Dorsolateral prefrontal cortex (tissue), 120 donors: ENCODE measurements at regions of chr6 and their contacts with region 1.

Region 1: DNA sequence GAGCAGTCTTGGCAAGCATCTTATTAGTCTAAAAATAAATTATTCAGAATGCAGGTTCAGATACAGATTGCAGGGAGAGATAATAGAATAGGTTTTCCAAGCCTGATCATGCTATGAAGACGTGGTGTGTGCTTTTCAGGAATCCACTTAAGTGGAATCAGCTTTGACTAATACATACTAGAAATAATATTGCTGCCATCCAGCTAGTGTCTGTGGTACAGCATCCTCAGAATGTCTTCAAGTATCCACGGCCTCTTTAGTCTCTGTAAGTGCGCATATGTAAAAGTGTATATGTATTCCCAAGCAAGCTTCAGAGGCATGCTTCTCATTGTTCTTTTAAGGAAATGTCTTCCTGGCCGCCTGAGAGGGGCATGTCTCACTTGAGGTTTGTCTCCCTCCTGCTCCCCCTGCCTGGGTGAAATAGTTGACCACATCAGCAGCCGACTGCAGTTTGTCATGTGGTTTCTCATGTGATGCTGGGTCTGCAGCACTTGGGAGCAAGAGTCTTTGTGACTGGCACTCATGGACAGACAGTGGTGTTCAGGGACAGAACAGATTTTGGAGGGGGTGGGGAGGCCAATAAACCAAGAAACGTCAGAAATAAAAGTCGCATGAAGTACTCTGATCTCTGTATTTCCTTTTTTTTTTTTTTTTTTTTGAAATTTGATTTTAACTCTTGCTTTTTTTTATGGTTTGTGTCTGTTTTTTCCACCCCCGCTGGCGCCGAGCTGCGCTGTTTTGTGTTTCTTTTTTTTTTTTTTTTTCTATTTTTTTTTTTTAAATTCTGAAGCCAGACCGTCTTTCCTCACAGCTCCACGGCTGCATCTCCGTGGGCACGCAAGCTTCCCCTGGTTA is 150.8 kb downstream of the PRL start:
- DNase-seq: peak; percentile 26 to 92 (median 86)
- H3K4me3 ChIP-seq: peak overlapping the region; percentile 47 to 86 (median 72)
- H3K27ac ChIP-seq: peak overlapping the region in 58 of 59 donors; percentile 7 to 93 (median 84)
- H3K27me3 ChIP-seq: no peaks in the 10 kb centered on the region
- CTCF ChIP-seq: peak; percentile 22 to 70 (median 53)

Region 2: DNA sequence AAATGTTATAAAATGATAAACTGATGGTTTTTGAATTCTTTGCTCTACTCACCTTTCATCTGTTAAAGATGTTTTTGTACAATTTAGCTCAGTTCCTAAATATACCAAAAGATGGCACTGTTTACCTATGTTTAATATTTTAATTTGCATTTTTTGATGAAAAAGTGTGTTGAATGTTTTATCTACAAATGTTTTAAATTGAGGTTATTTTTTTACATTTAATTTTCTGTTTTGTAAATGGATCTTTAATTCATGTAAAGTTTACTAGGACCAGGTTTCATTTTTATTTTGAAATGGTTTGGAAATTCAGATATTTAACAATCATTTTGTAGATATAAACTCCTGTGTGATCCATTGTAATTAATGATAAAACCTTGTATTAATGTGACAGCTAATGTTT is 1581.8 kb before region 1 on chr6:
- intact Hi-C with region 1: loop called in 1 of 2 experiments (anchors 10 kb)
- DNase-seq: no peak
- H3K4me3 ChIP-seq: no peak overlapping the region
- H3K27ac ChIP-seq: no peak overlapping the region
- H3K27me3 ChIP-seq: no peaks in the 10 kb centered on the region
- CTCF ChIP-seq: peak; percentile 52 to 93 (median 75)

Region 3: GRCh38 chr6:21935561-21936028 is 210.5 kb before region 1 on chr6:
- intact Hi-C with region 1: loop called in 1 of 2 experiments (anchors 10 kb)
- DNase-seq: no peak
- H3K4me3 ChIP-seq: no peak overlapping the region
- H3K27ac ChIP-seq: no peak overlapping the region
- H3K27me3 ChIP-seq: no peaks in the 10 kb centered on the region
- CTCF ChIP-seq: peak in 53 of 56 donors; percentile 15 to 65 (median 47)

Region 4: GRCh38 chr6:22102671-22103070 is 43.4 kb before region 1 on chr6:
- intact Hi-C with region 1: no loop called
- DNase-seq: no peak
- H3K4me3 ChIP-seq: no peak overlapping the region
- H3K27ac ChIP-seq: no peak overlapping the region
- H3K27me3 ChIP-seq: no peaks in the 10 kb centered on the region
- CTCF ChIP-seq: no peak

Region 5: DNA sequence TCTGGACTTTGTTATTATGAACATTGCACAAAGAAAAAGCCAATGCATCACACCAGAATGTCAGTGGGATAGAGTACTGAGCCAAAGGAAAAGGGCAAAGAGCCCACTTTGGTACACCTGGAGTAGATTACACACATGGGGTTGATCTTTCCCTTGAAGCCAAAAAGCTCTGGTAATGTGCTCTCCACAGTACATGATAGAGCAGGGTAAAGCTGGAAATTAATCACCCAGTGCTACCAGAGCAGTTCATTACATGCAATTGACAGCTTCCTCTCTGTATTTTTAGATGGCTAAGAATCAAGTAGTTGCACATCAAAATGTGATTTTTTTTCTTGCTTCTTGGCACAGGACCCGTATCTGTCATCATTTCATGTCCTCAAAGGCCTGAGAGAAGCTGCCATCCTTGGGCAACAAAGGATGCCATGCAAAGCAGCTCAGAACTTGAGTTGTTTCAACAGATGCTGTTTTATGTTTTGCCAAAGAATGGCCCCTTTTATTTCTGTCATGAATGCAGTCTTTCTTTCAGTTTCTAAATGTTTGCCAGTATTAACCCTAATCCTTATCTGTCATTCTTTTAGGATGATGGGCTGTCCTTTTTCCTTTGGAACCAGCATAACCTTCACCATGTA is 511.4 kb after region 1 on chr6:
- intact Hi-C with region 1: loop called in 1 of 2 experiments (anchors 5 kb)
- DNase-seq: peak in 9 of 10 donors; percentile 11 to 84 (median 63)
- H3K4me3 ChIP-seq: peak overlapping the region in 1 of 59 donors; percentile 27
- H3K27ac ChIP-seq: peak overlapping the region in 54 of 59 donors; percentile 1 to 85 (median 62)
- H3K27me3 ChIP-seq: no peaks in the 10 kb centered on the region
- CTCF ChIP-seq: peak in 8 of 56 donors; percentile 4 to 27 (median 8)

Region 6: GRCh38 chr6:22737331-22737730 is 591.3 kb after region 1 on chr6:
- intact Hi-C with region 1: loop called in 1 of 2 experiments (anchors 5 kb)
- DNase-seq: peak in 9 of 10 donors; percentile 7 to 72 (median 54)
- H3K4me3 ChIP-seq: no peak overlapping the region
- H3K27ac ChIP-seq: no peak overlapping the region
- H3K27me3 ChIP-seq: no peaks in the 10 kb centered on the region
- CTCF ChIP-seq: peak; percentile 37 to 88 (median 69)